Calu3 (cell line): ENCODE measurements at regions of chr2 and their contacts with region 1.

Region 1: GRCh38 chr2:149487189-149487588 is 100.4 kb downstream of the MMADHC start:
- DNase-seq: no peak
- H3K4me3 Mint-ChIP-seq: no peak overlapping the region
- H3K27ac Mint-ChIP-seq: no peak overlapping the region
- H3K4me1 Mint-ChIP-seq: no peaks in the 10 kb centered on the region
- H3K27me3 Mint-ChIP-seq: peaks cover 16% of the 10 kb centered on the region
- CTCF ChIP-seq: no peak

Region 2: DNA sequence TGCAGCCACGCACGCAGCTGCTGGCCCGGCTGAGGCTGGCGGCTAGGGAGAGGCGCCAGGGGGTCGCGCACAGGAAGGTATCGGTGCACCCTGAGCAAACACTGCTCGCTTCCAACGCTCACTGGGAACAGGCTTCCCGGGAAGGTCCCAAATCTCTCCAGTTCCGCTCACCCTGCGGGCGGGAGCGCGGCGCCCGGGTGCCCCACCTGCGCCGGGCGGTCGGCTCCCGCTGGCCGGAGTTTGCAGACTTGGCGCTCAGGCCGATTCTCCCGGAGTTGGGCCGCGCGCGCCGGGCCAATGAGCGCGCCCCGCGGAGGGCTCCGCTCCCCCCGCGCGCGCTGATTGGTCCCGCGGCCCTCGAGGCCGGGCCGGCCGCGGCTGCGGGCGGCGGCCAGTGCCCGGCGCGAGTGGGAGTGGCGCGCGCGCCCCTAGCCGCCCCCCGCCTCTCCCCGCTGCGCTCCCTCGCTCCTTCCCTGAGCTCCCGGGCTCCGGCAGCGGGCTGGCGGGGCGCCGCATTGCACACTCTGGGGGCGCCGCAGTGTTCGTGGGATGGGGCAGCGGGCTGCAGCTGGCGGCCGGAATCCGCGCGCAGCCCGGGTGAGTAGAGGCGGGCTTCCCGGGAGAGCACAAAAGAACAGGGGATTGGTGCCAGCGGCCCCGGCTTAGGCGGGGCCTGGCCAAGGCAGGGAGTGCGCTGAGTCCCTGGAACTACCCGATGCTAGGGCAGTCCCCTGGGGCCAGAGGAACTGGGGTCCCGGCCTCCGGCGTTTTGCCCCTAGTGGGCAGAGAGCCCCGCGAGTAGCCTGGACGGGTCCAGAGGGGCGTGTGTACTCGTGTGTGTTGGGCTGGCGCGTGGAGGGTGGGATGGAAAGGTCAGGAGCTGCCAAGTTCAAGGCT is 156.8 kb before region 1 on chr2 and contains the start of gene LYPD6:
- CTCF ChIA-PET with region 1: no interaction called
- intact Hi-C with region 1: loop called (anchors 1 kb)
- DNase-seq: peak; percentile 83
- H3K4me3 Mint-ChIP-seq: peak within 1 kb of the TSS; percentile 97
- H3K27ac Mint-ChIP-seq: peak within 1 kb of the TSS; percentile 85
- H3K4me1 Mint-ChIP-seq: peaks cover 8% of the 10 kb centered on the region
- H3K27me3 Mint-ChIP-seq: peaks cover 25% of the 10 kb centered on the region
- CTCF ChIP-seq: no peak
- total RNA-seq, gene LYPD6: 3.4 and 3.9 TPM in 2 replicates